Activated CD8-positive, alpha-beta T cell treated with anti-CD3 and anti-CD28 coated beads for 36 hours (primary cell): ENCODE measurements at regions of chr1 and their contacts with region 1.

Region 1: DNA sequence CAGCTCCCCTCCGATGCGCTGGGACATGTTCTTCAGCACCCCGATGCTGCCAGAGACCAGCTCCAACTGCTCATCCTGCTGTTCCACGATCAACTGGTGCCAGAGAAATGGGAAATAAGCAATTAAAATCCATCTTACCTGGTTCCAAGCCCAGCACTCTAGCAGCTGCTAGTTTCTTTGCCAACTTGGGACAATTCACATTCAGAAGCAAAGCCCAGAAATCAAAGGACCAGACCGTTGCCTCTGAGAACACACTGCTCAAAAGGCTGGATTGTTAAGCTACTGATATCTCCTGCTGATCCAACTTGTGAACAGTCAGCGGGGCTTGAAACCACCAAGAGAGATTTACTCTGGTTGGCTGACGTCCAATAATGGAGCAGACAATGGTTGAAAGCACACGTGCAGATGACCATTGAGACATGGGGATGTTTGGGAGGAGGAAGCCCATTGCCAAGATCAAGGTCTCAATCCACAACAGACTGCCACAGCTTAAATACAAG is 34.4 kb downstream of the STX6 start:
- DNase-seq: no peak
- ATAC-seq: no peak
- H3K4me3 Mint-ChIP-seq: no peak overlapping the region
- H3K27ac Mint-ChIP-seq: no peak overlapping the region
- H3K4me1 Mint-ChIP-seq: peaks cover 6% of the 10 kb centered on the region
- H3K27me3 Mint-ChIP-seq: no peaks in the 10 kb centered on the region
- CTCF ChIP-seq: no peak

Region 2: GRCh38 chr1:180821970-180822369 is 166.3 kb before region 1 on chr1:
- CTCF ChIA-PET with region 1: no interaction called
- POLR2A ChIA-PET with region 1: no interaction called
- intact Hi-C with region 1: no loop called
- DNase-seq: no peak
- ATAC-seq: no peak
- H3K4me3 Mint-ChIP-seq: no peak overlapping the region
- H3K27ac Mint-ChIP-seq: no peak overlapping the region
- H3K4me1 Mint-ChIP-seq: no peaks in the 10 kb centered on the region
- H3K27me3 Mint-ChIP-seq: no peaks in the 10 kb centered on the region
- CTCF ChIP-seq: no peak

Region 3: GRCh38 chr1:180962178-180962577 is 26.1 kb before region 1 on chr1:
- CTCF ChIA-PET with region 1: no interaction called
- POLR2A ChIA-PET with region 1: no interaction called
- intact Hi-C with region 1: no loop called
- DNase-seq: peak; percentile 14
- ATAC-seq: no peak
- H3K4me3 Mint-ChIP-seq: no peak overlapping the region
- H3K27ac Mint-ChIP-seq: no peak overlapping the region
- H3K4me1 Mint-ChIP-seq: peaks cover 7% of the 10 kb centered on the region
- H3K27me3 Mint-ChIP-seq: no peaks in the 10 kb centered on the region
- CTCF ChIP-seq: no peak

Region 4: DNA sequence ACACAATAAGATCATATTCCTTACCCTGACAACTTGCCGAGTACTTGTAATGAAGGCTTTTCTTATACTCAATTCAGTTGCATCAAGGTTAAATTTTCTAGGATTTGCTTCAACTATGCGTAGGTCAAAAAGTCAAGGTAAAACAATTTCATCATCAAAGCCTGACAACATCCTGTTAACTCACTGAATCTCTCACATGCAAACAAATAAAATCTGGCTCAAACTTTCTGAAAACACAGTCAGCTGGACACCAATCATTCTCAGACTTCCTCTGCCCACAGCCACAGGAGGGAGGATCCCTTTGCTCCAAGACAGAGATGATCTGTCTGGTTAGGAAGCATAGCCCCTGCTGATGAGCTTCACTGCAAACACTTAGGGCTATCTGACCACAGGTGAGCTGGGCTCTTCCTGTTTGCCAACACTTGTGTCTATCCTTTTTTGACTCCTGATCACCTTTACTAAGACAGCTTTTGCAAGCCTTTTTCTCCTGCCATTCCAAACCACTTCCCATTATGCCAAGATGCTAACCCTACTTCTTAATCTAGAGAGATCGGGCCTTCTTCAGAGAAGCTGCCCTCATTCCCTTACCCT is 14.4 kb after region 1 on chr1:
- CTCF ChIA-PET with region 1: interaction called, 10 read pairs
- POLR2A ChIA-PET with region 1: interaction called, 3 read pairs
- intact Hi-C with region 1: no loop called
- DNase-seq: no peak
- ATAC-seq: no peak
- H3K4me3 Mint-ChIP-seq: no peak overlapping the region
- H3K27ac Mint-ChIP-seq: no peak overlapping the region
- H3K4me1 Mint-ChIP-seq: peaks cover 3% of the 10 kb centered on the region
- H3K27me3 Mint-ChIP-seq: no peaks in the 10 kb centered on the region
- CTCF ChIP-seq: no peak